ENCODE measurements at regions of chr5 and their contacts with region 1.

Region 1: GRCh38 chr5:110738812-110739651 is at the start of gene SLC25A46:
- DNase-seq: peak; percentile 86
- ATAC-seq: peak; percentile 96
- H3K4me3 ChIP-seq: peak within 1 kb of the TSS; percentile 85 to 96 (median 95)
- H3K27ac ChIP-seq: peak within 1 kb of the TSS; percentile 83
- H3K4me1 ChIP-seq: peaks cover 11% of the 10 kb centered on the region
- H3K27me3 ChIP-seq: no peaks in the 10 kb centered on the region; a peak in 2 of 5 replicates
- CTCF ChIP-seq: 0 out of 2 replicates have a peak, but pooled peaks have one; percentile 11
- EP300 ChIP-seq: 0 out of 4 replicates have a peak, but pooled peaks of 1 of the 2 experiments have one; percentile 15
- POLR2A ChIP-seq: peak; percentile 68 to 86
- RAD21 ChIP-seq: peak; percentile 10; the same call in 1 of the 2 replicates
- total RNA-seq, gene SLC25A46: 34.6 and 45.2 TPM in 2 replicates

Region 2: DNA sequence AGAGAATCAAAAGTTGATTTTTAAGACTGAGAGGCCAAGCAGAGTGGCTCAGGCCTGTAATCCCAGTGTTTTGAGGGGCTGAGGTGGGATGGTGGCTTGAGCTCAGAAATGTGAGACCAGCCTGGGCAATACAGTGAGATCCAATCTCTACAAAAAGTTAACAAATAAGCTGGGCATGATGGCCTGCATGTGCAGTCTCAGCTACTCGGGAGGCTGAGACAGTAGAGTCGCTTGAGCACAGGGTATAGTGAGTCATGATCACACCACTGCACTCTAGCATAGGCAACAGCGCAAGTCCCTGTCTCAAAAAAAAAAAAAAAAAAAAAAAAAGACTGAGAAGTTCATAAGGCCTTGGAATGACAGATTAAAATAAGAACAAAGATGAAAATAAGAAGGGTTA is 189.7 kb before region 1 on chr5:
- CTCF ChIA-PET with region 1: no interaction called
- POLR2A ChIA-PET with region 1: no interaction called
- in situ Hi-C with region 1: no loop called
- intact Hi-C with region 1: no loop called
- DNase-seq: no peak
- ATAC-seq: no peak
- H3K4me3 ChIP-seq: no peak overlapping the region
- H3K27ac ChIP-seq: no peak overlapping the region
- H3K4me1 ChIP-seq: no peaks in the 10 kb centered on the region
- H3K27me3 ChIP-seq: no peaks in the 10 kb centered on the region
- CTCF ChIP-seq: no peak
- EP300 ChIP-seq: no peak
- POLR2A ChIP-seq: no peak
- RAD21 ChIP-seq: no peak

Region 3: DNA sequence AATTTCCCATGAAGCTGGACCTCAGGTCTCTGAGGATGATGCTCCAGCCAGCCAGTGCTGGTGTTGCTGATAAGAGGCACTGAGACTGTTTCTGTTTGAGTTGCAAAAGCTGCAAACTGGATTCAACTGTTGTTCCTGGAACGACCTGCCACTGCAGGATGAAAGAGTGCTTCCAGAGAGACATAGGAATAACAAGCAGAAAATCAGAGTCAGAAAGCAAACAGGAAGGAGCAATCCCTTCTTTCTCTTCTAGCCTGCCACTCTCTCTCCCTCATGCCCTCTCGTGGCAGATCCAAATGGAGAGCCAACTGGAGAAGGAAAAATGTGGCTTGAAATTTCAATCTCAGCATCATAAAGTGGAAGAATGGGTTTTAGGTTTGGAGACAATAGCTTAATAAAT is 662.9 kb after region 1 on chr5:
- CTCF ChIA-PET with region 1: no interaction called
- POLR2A ChIA-PET with region 1: no interaction called
- in situ Hi-C with region 1: no loop called
- intact Hi-C with region 1: loop called (anchors 10 kb)
- DNase-seq: no peak
- ATAC-seq: peak; percentile 36; the same call in 2 of the 3 replicates
- H3K4me3 ChIP-seq: no peak overlapping the region
- H3K27ac ChIP-seq: no peak overlapping the region
- H3K4me1 ChIP-seq: peaks cover 20% of the 10 kb centered on the region
- H3K27me3 ChIP-seq: no peaks in the 10 kb centered on the region; a peak in 1 of 5 replicates
- CTCF ChIP-seq: no peak; the same call in 1 of the 2 replicates
- EP300 ChIP-seq: no peak
- POLR2A ChIP-seq: no peak
- RAD21 ChIP-seq: no peak